PC-3 (cell line): ENCODE measurements at regions of chr16 and their contacts with region 1.

Region 1: DNA sequence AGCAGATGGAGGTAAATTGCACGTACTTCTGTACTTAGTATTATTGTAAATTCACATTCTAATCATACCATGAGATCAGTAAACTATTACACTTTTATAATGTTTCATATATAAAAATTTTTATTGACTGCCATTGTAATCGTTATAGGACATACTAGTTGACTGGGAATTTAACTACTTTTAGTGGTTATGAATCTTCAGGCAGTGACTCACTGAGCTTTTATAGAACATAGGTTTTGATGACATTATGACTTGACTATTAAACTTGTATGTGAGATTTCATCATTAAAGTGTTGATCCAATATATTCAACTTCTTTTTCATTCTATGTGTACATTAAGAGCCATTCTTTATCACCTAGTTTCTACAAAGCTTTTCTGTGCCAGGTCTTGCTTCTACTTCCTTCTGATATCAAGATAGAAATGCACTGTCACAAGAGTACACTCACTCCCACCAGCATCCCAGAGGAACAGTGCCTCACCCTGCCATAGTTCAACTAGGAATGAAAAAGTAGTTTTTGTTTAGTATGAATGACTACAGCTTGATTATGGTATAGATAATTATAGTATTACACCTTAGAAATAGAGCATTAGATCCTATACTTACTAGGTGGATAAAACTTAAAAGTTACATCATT is 142.4 kb upstream of the RBL2 start:
- DNase-seq: peak; percentile 82
- ATAC-seq: peak; percentile 84
- H3K4me3 ChIP-seq: peak overlapping the region; percentile 24; the same call in 1 of the 2 replicates
- H3K27ac ChIP-seq: peak overlapping the region; percentile 87
- H3K4me1 ChIP-seq: peaks cover 24% of the 10 kb centered on the region
- H3K27me3 ChIP-seq: no peaks in the 10 kb centered on the region
- CTCF ChIP-seq: no peak

Region 2: DNA sequence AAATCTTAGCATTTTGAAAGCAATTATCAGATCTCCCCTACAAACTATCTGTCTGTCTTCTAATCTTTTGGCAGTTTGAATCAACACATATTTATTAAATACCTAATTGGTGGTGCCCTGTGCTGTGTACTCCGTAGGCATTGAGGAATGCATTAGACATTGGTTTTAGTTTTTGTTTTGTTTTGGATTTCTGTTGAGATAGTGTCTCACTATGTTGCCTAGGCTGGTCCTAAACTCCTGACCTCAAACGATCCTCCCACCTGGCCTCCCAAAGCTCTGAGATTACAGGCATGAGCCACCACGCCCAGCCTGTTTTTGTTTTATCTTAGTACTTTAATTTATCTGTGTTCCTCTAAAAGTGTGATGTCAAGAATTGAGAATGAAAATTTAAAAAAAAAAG is 17.6 kb after region 1 on chr16:
- CTCF ChIA-PET with region 1: no interaction called
- POLR2A ChIA-PET with region 1: no interaction called
- intact Hi-C with region 1: no loop called
- DNase-seq: no peak
- ATAC-seq: no peak
- H3K4me3 ChIP-seq: no peak overlapping the region
- H3K27ac ChIP-seq: no peak overlapping the region
- H3K4me1 ChIP-seq: no peaks in the 10 kb centered on the region
- H3K27me3 ChIP-seq: no peaks in the 10 kb centered on the region
- CTCF ChIP-seq: no peak

Region 3: GRCh38 chr16:53372992-53373871 is 81.4 kb after region 1 on chr16:
- CTCF ChIA-PET with region 1: interaction called, 17 read pairs
- POLR2A ChIA-PET with region 1: no interaction called
- intact Hi-C with region 1: no loop called
- DNase-seq: peak; percentile 67
- ATAC-seq: peak; percentile 86
- H3K4me3 ChIP-seq: peak overlapping the region; percentile 79
- H3K27ac ChIP-seq: peak overlapping the region; percentile 31; the same call in 1 of the 2 replicates
- H3K4me1 ChIP-seq: peaks cover 15% of the 10 kb centered on the region
- H3K27me3 ChIP-seq: no peaks in the 10 kb centered on the region
- CTCF ChIP-seq: no peak